Breast epithelium (tissue), 4 donors: ENCODE measurements at regions of chr5 and their contacts with region 1.

Region 1: DNA sequence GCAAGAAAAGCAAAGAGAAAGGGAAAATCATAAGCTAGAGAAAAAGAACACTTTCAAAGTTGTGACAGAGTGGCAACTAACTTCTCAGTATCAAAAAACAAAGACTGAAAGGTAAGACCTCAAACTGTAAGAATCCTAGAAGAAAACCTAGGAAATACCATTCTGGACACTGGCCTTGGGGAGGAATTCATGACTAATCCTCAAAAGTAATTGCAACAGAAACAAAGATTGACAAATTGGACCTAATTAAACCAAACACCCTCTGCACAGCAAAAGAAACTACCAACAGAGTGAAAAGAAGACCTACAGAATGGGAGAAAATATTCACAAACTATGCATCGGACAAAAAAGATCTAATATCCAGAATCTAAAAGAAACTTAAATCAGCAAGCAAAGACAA is 79.1 kb downstream of the FEM1C start:
- DNase-seq: no peak
- H3K4me3 ChIP-seq: no peak overlapping the region
- H3K27ac ChIP-seq: no peak overlapping the region
- H3K4me1 ChIP-seq: no peaks in the 10 kb centered on the region
- H3K27me3 ChIP-seq: no peaks in the 10 kb centered on the region
- CTCF ChIP-seq: no peak
- POLR2A ChIP-seq: no peak

Region 2: GRCh38 chr5:113846932-113847331 is 1618.5 kb before region 1 on chr5:
- intact Hi-C with region 1: no loop called
- DNase-seq: no peak
- H3K4me3 ChIP-seq: no peak overlapping the region
- H3K27ac ChIP-seq: no peak overlapping the region
- H3K4me1 ChIP-seq: no peaks in the 10 kb centered on the region
- H3K27me3 ChIP-seq: no peaks in the 10 kb centered on the region
- CTCF ChIP-seq: no peak
- POLR2A ChIP-seq: no peak

Region 3: GRCh38 chr5:115557667-115558387 is 92.4 kb after region 1 on chr5:
- intact Hi-C with region 1: loop called (anchors 5 kb)
- DNase-seq: no peak
- H3K4me3 ChIP-seq: no peak overlapping the region
- H3K27ac ChIP-seq: peak overlapping the region in 1 of 2 donors; percentile 41
- H3K4me1 ChIP-seq: no peaks in the 10 kb centered on the region
- H3K27me3 ChIP-seq: no peaks in the 10 kb centered on the region
- CTCF ChIP-seq: no peak
- POLR2A ChIP-seq: no peak

Region 4: DNA sequence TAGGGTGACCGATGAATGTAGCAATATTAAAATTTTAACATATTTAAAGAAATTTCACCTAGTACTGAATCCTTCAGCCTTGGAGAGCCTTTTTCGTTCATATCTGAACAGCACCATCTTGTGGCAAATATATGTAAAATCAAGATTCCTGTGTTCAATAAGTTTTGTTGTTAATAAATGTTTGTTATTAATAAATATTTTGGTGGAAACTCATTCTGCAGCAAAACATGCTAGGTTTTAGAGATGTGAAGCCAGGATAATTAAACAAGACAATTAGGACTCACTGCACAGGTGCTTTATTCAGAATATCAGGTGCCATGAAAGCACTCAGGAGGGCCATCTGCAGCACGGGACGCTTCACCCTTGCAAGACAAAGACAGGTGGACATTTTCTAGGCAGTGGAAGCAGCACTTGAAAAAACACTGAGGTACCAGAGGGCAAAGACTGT is 121.2 kb after region 1 on chr5:
- intact Hi-C with region 1: no loop called
- DNase-seq: no peak
- H3K4me3 ChIP-seq: no peak overlapping the region
- H3K27ac ChIP-seq: no peak overlapping the region
- H3K4me1 ChIP-seq: no peaks in the 10 kb centered on the region
- H3K27me3 ChIP-seq: no peaks in the 10 kb centered on the region
- CTCF ChIP-seq: peak in 2 of 3 donors; percentile 50 to 57
- POLR2A ChIP-seq: no peak